Activated CD4-positive, alpha-beta T cell treated with anti-CD3 and anti-CD28 coated beads for 36 hours (primary cell): ENCODE measurements at regions of chr4 and their contacts with region 1.

Region 1: DNA sequence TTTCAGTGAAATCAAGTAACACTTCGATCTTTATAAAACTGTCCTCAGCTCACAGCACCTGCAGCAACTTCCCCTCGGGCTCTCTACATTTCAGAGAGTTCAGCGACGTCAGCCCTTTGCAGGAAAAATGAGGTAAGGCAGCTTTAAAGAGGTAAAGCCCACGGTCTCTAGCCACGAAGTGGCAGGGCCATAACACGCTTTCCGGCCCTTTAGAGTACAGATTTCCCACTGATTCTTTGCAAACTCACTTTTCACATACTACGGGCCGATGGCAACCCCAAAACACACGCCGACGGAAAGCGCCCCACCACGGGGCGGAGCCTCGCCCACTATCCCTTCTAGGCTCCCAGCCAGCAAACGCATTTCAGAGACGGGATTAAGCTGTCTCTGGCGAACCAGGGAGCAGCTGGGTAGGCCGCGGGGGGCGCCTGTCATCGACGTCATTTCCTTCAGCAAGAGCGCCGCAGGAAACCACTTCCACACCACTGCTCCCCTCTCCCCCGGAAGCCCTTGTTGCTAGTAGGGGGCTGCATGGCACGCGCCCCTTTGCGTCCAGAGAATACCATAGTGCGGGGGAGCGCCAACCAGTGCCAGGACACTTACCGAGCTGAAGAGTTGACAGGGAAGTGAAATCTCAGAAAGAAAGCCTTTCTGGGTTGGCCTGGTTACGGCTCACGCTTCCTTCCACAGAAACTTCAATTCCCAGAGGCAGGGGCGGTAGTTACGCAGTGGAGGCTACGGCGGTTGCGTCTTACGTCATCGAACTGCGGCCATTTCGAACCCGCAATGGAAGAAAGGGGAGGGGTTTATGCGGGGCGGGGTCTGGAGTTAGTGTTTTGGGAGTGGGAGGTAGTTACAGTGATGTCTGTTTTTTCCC is at the start of gene TRMT10A:
- DNase-seq: peak; percentile 98
- ATAC-seq: peak; percentile 93
- H3K4me3 Mint-ChIP-seq: peak within 1 kb of the TSS; percentile 89
- H3K27ac Mint-ChIP-seq: peak within 1 kb of the TSS; percentile 95
- H3K4me1 Mint-ChIP-seq: peaks cover 12% of the 10 kb centered on the region
- H3K27me3 Mint-ChIP-seq: peaks cover 14% of the 10 kb centered on the region
- total RNA-seq, gene TRMT10A: 7.8 to 9.8 TPM

Region 2: GRCh38 chr4:98928505-98929340 is 634.8 kb before region 1 on chr4 and contains the start of gene EIF4E:
- CTCF ChIA-PET with region 1: no interaction called
- POLR2A ChIA-PET with region 1: no interaction called
- intact Hi-C with region 1: loop called in 1 of 2 experiments (anchors 2 kb)
- DNase-seq: peak; percentile 98
- ATAC-seq: peak; percentile 80
- H3K4me3 Mint-ChIP-seq: peak within 1 kb of the TSS; percentile 92
- H3K27ac Mint-ChIP-seq: peak within 1 kb of the TSS; percentile 100
- H3K4me1 Mint-ChIP-seq: peaks cover 47% of the 10 kb centered on the region
- H3K27me3 Mint-ChIP-seq: no peaks in the 10 kb centered on the region
- total RNA-seq, gene EIF4E: 132 to 149 TPM

Region 3: DNA sequence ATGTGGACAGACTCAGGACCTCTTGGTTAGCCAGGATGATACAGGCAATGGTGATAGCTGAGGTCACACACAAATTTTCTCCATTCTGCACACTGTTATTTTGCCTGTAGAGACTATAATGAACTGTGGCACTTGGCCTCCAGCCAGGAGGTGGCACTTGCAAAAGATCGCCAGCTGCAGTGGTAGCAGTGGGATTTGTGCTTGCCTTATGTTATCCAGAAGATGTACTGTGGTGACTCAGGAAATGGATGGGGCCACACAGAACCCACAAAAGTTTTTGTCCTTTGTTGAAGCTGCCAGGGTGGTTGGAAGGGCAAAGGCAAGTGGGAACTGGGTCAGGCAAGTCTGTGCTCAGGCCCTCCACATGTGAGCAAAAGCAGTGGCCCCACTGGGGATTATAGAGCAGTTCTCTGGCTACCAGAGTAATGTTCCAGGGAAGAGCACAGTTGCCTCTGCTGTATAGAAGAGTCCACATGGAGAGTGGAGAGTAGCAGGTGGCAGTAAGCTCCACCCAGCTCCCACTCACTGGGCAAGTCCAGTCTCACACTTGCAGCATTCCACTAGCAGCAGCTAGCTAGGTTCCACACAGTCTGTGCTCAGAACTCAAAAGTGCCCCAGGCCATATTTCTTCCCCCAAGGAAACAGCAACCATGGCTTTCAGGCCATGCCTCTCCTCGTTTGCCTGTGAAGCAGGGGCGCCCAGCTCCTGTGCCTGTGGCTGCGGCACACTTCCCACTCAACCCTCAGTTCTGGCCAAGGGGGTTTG is 58.6 kb before region 1 on chr4:
- CTCF ChIA-PET with region 1: interaction called, 4 read pairs
- POLR2A ChIA-PET with region 1: no interaction called
- intact Hi-C with region 1: loop called (anchors 1 to 5 kb)
- DNase-seq: peak; percentile 27
- ATAC-seq: no peak
- H3K4me3 Mint-ChIP-seq: no peak overlapping the region
- H3K27ac Mint-ChIP-seq: peak overlapping the region; percentile 37
- H3K4me1 Mint-ChIP-seq: peaks cover 53% of the 10 kb centered on the region
- H3K27me3 Mint-ChIP-seq: no peaks in the 10 kb centered on the region

Region 4: GRCh38 chr4:99808260-99808857 is 244.8 kb after region 1 on chr4:
- CTCF ChIA-PET with region 1: interaction called, 22 read pairs
- POLR2A ChIA-PET with region 1: no interaction called
- intact Hi-C with region 1: loop called (anchors 1 kb)
- DNase-seq: peak; percentile 86
- ATAC-seq: peak; percentile 95
- H3K4me3 Mint-ChIP-seq: no peak overlapping the region
- H3K27ac Mint-ChIP-seq: no peak overlapping the region
- H3K4me1 Mint-ChIP-seq: peaks cover 17% of the 10 kb centered on the region
- H3K27me3 Mint-ChIP-seq: no peaks in the 10 kb centered on the region

Region 5: DNA sequence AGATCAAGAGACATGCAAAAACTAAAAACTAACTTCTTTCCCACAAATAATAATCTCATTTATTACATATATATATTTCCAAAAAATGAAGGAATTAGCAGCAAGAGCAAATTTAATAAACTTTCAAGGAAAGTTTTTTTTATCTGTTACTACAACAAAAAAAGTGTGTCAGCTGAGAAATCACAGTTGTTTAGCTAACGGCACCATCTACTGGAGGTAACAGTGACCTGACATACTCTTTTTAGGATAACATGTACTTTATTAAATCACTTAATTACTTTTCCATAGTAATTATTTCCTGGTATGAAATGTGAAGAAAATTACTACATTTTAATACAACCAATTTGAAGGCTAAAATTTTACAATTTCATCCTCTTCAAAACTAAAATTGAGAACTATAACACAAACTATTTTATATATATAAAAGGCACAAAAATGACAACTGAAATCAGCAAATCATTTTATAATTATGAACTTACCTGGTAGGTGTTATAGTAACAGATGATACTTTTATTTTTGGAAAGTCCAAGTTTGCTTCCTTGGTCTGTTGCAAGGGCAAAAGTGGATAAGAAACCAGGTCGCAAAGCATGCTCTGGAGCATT is 321.6 kb after region 1 on chr4:
- CTCF ChIA-PET with region 1: interaction called, 6 read pairs
- POLR2A ChIA-PET with region 1: no interaction called
- intact Hi-C with region 1: loop called (anchors 1 to 2 kb)
- DNase-seq: peak; percentile 40
- ATAC-seq: no peak
- H3K4me3 Mint-ChIP-seq: no peak overlapping the region
- H3K27ac Mint-ChIP-seq: no peak overlapping the region
- H3K4me1 Mint-ChIP-seq: peaks cover 10% of the 10 kb centered on the region
- H3K27me3 Mint-ChIP-seq: no peaks in the 10 kb centered on the region

Region 6: GRCh38 chr4:100060765-100061416 is 497.3 kb after region 1 on chr4:
- CTCF ChIA-PET with region 1: no interaction called
- POLR2A ChIA-PET with region 1: no interaction called
- intact Hi-C with region 1: loop called in 1 of 2 experiments (anchors 5 kb)
- DNase-seq: no peak
- ATAC-seq: no peak
- H3K4me3 Mint-ChIP-seq: no peak overlapping the region
- H3K27ac Mint-ChIP-seq: no peak overlapping the region
- H3K4me1 Mint-ChIP-seq: no peaks in the 10 kb centered on the region
- H3K27me3 Mint-ChIP-seq: peaks cover 7% of the 10 kb centered on the region